Common myeloid progenitor, CD34-positive (primary cell): ENCODE measurements at regions of chr11 and their contacts with region 1.

Region 1: DNA sequence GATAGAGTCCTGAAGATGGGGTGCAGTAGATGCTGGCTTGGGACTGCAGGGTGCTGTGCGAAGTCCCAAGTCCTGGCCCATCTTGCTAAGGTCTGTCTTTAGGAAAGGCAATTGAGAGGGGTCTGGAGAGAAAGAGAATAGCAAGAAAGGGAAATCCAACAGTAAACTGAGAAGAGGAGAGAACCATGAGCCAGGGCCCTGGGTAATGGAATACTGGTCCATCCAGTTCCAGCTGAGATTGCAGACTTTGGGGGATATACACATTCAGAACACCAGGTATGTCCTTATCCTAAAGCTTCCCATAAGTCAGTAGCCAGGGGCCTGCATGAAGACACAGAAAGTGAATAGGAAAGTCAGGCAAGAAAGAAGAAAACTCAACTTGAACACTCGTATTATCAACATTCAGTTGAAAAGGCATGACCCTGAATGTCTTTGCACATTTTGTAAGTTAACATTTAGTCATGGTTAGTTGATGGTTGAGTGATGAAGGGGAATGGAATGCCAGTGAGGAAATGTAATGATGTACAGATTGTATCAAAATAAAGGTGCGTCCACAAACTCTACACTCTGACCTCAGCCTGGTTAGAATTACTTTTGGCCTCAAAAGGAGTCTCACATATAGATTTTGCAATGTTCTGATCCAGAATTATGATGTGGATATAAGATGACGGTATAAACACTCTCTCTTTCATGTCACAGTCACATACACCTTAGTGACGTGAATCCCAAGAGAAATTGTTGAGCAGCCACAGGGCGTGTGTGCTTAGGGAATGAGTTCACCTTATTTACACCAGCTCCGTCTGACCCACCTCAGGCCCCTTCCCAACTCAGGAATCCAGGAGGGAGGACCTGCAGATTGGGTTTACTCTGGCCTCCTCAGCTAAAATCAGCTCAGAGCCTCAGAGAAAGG is 100.3 kb downstream of the RDX start:
- DNase-seq: no peak
- H3K4me3 ChIP-seq: no peak overlapping the region
- H3K27ac ChIP-seq: no peak overlapping the region
- H3K4me1 ChIP-seq: peaks cover 0 to 4% (median 0%) of the 10 kb centered on the region in 4 experiments
- H3K27me3 ChIP-seq: no peaks in the 10 kb centered on the region

Region 2: GRCh38 chr11:109564241-109564640 is 631.9 kb before region 1 on chr11:
- CTCF ChIA-PET with region 1: no interaction called
- POLR2A ChIA-PET with region 1: no interaction called
- DNase-seq: no peak
- H3K4me3 ChIP-seq: no peak overlapping the region
- H3K27ac ChIP-seq: no peak overlapping the region
- H3K4me1 ChIP-seq: no peaks in the 10 kb centered on the region
- H3K27me3 ChIP-seq: no peaks in the 10 kb centered on the region

Region 3: GRCh38 chr11:110182551-110183285 is 13.4 kb before region 1 on chr11:
- CTCF ChIA-PET with region 1: interaction called, 13 read pairs
- POLR2A ChIA-PET with region 1: interaction called, 3 read pairs
- DNase-seq: peak in 2 of 3 donors; percentile 20 to 24
- H3K4me3 ChIP-seq: no peak overlapping the region
- H3K27ac ChIP-seq: no peak overlapping the region
- H3K4me1 ChIP-seq: no peaks in the 10 kb centered on the region
- H3K27me3 ChIP-seq: no peaks in the 10 kb centered on the region

Region 4: DNA sequence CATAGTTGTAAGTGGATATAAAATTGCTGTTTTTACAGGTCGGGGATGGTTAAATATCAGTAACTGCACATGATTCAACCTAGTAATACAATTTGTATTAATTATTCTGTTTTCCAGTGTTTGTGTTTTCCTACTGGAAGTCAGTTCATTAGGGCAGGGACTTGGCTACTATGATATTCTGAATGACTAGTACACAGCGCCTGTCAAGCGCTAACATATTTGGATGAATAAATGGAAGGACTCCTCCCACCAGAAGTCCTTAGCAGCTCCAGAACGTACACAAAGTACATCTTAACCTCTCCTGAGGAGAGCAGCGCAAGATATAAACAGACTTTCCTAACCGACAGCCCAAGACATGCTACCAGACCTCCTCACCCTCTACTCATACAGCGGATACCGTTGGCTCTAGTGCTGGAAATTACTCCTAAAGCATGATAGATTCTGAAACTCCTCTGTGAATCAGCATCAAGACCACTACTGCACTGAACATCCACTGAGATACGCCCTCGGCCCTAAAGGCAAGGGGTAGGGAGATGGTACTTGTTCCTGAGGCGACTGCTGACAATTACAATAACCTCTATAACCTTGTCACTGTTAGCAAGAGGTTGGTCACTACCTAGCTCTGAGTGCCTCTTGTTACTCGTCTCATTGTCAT is 21.2 kb after region 1 on chr11:
- CTCF ChIA-PET with region 1: no interaction called
- POLR2A ChIA-PET with region 1: no interaction called
- DNase-seq: no peak
- H3K4me3 ChIP-seq: no peak overlapping the region
- H3K27ac ChIP-seq: no peak overlapping the region
- H3K4me1 ChIP-seq: no peaks in the 10 kb centered on the region
- H3K27me3 ChIP-seq: no peaks in the 10 kb centered on the region

Region 5: DNA sequence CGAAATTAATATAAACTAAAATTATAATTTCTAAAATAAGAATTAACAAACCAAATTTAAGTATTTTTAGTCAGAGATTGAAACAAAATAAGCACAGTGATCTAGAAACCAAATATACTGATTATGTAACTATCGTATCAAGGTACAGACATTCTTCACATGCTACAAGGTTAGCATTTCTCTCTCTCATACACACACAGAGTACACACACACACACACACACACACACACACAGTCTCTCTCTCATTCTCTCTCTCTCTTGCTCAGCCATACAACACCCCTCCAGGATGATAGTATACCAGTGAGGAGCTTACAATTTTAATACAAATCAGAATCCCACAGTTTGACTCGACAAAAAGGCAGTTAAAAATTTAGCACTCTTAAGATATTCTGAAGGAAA is 34.3 kb after region 1 on chr11:
- CTCF ChIA-PET with region 1: no interaction called
- POLR2A ChIA-PET with region 1: no interaction called
- DNase-seq: no peak
- H3K4me3 ChIP-seq: no peak overlapping the region
- H3K27ac ChIP-seq: no peak overlapping the region
- H3K4me1 ChIP-seq: no peaks in the 10 kb centered on the region
- H3K27me3 ChIP-seq: no peaks in the 10 kb centered on the region

Region 6: DNA sequence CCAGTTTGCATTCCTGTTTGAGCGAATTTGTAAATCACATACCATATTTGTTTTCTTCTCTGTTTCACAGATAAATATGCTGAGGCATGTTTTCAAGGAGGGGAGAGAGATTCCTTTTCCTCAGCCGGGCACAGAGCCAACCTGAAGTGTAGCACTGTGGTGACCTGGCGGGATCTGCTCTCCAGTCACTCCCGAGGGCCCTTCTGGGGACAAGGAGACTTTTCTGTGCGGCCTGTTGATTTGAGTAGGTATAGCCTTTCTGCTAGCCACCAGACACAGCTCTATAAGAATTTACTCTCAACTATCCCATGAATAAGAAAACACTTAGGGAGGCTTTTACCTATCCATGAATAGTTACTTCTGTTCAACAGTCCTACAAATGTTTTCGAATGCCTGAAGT is 170.2 kb after region 1 on chr11:
- CTCF ChIA-PET with region 1: interaction called, 46 read pairs
- POLR2A ChIA-PET with region 1: no interaction called
- DNase-seq: no peak
- H3K4me3 ChIP-seq: no peak overlapping the region
- H3K27ac ChIP-seq: no peak overlapping the region
- H3K4me1 ChIP-seq: peaks cover 0 to 9% (median 5%) of the 10 kb centered on the region in 4 experiments
- H3K27me3 ChIP-seq: no peaks in the 10 kb centered on the region

Region 7: GRCh38 chr11:110376711-110377324 is 180.7 kb after region 1 on chr11:
- CTCF ChIA-PET with region 1: interaction called, 15 read pairs
- POLR2A ChIA-PET with region 1: no interaction called
- DNase-seq: peak; percentile 74 to 90 (median 87)
- H3K4me3 ChIP-seq: peak overlapping the region in 5 of 7 experiments; percentile 26 to 78 (median 65)
- H3K27ac ChIP-seq: peak overlapping the region in 1 of 2 experiments; percentile 47
- H3K4me1 ChIP-seq: peaks cover 0 to 9% (median 2%) of the 10 kb centered on the region in 4 experiments
- H3K27me3 ChIP-seq: no peaks in the 10 kb centered on the region

Region 8: DNA sequence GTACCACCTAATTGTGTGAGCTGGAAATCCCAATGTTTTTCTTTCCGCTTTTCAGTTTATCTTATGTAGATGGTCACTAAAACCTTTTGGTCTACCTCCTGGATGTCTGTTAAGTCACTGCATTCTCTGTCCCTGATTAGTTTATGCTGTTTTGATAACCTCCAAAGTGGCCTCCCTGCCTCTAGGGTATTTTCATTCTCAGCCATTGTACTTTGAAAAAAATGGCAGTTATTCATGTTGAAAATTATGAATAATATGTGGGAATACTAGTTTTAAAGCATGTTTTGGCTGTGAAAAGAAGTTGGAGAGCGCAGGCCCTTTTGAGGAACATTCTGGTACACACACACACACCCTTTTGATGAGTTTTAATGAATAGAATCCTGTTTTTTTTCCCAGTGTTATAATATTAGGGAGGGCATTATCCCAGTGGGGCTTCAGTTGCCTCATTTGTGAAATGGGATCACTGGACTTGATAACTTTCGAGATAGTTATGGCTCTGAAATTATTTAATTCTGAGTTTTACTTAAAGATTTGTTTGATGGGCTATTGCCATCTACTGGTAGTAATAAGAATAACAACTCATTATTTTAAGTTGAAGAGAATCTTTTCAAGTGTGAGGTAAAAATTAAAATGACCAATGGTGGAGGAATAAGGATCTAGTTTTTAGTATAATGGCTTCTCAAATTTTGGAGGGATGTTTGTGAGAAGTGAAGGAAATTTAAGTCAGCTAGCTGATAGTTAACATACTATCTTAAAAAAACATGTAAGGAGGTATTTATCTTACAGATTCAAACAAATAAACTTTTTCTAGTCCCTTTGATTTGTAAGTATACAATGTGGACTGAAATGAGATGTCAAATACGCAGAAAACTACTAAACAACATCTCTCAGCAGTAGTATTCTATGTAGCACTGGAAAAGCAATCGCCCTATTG is 237.6 kb after region 1 on chr11:
- CTCF ChIA-PET with region 1: interaction called, 27 read pairs
- POLR2A ChIA-PET with region 1: no interaction called
- DNase-seq: peak; percentile 34 to 60 (median 56)
- H3K4me3 ChIP-seq: no peak overlapping the region
- H3K27ac ChIP-seq: no peak overlapping the region
- H3K4me1 ChIP-seq: peaks cover 14 to 33% (median 23%) of the 10 kb centered on the region in 4 experiments
- H3K27me3 ChIP-seq: no peaks in the 10 kb centered on the region